ENCODE measurements at regions of chr2 and their contacts with region 1.

Region 1: GRCh38 chr2:231900486-231900942 is 25.7 kb downstream of the NPPC start:
- DNase-seq: peak; percentile 88
- ATAC-seq: peak; percentile 78

Region 2: GRCh38 chr2:231568785-231569435 is 331.6 kb before region 1 on chr2:
- intact Hi-C with region 1: no loop called
- DNase-seq: no peak
- ATAC-seq: no peak

Region 3: DNA sequence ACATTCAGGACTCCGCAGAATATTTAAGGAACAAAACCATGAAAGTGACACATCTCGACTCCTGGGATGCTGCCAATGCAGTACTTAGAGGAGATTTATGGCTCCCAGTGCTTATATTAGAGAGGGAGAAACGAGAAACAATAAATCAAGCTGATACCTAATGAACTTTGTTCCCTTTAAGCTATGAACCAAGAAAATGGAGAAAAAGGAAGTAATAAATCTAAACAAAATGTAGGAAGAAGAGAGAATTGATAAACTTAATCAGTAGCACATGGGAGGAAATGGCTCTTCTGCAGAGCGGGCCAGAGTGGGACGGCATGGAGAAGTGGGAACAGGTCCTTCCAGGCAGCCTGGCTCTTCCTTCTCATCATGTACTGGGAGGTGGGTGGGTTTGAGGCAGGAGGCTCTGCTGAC is 17.0 kb before region 1 on chr2:
- intact Hi-C with region 1: no loop called
- DNase-seq: no peak
- ATAC-seq: no peak

Region 4: GRCh38 chr2:232444409-232445148 is 544.1 kb after region 1 on chr2:
- intact Hi-C with region 1: loop called (anchors 10 kb)
- DNase-seq: no peak
- ATAC-seq: no peak

Measured in left ventricle myocardium superior (tissue), 1 donor.